Thyroid gland (tissue), 4 donors: ENCODE measurements at regions of chr1 and their contacts with region 1.

Region 1: DNA sequence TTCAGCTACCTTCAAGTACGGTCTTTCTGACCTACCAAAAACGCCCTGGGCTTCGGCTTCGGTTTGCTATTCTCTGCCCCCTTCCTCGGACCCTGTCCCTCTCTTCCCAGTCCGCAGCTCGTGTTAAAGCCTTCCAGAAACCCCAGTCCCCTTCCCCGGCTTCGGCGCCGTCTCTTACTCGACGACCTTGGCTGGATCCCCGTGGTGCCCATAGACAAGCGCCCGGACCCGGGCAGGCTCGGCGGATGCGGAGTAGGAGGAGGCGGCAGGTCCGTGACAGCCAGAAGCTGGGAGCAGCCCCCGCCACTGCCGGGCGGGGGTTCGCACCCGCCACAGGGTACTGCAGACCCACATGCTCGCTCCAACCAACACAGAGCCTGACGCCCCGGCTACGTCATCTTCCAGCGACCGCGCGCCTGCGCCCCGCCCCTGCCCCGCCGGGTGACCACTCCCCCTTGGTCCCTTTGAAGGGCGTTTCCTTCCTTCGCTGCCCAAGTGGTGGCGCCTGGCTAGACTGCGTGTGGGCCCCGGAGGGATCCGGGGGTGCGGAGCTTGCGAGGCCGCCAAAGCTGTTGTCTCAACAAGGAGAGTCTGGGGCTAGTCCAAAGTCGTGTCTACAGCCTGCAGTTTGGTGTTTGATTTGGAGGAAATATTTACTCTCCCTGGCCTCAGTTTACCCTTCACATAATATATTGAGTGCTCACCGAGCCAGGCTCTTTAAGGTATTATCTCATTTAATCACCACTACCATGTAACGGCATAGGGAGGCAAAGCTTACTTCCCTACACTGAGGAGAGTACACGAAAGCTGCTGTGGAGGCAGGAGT is at the start of gene MECR:
- DNase-seq: peak; percentile 88 to 90
- H3K4me3 ChIP-seq: peak within 1 kb of the TSS; percentile 10 to 77 (median 28)
- H3K27ac ChIP-seq: peak within 1 kb of the TSS in 2 of 3 donors; percentile 55 to 57
- H3K4me1 ChIP-seq: peaks cover 4 to 8% of the 10 kb centered on the region in 2 donors
- H3K27me3 ChIP-seq: no peaks in the 10 kb centered on the region
- CTCF ChIP-seq: peak in 2 of 6 experiments; percentile 2 to 32
- POLR2A ChIP-seq: peak in 1 of 2 donors; percentile 63
- total RNA-seq, gene MECR: 10.2 to 30.9 (median 18.0) TPM

Region 2: GRCh38 chr1:29145739-29146437 is 84.9 kb before region 1 on chr1:
- intact Hi-C with region 1: no loop called
- DNase-seq: no peak
- H3K4me3 ChIP-seq: no peak overlapping the region
- H3K27ac ChIP-seq: no peak overlapping the region
- H3K4me1 ChIP-seq: no peaks in the 10 kb centered on the region
- H3K27me3 ChIP-seq: no peaks in the 10 kb centered on the region
- CTCF ChIP-seq: no peak
- POLR2A ChIP-seq: no peak

Region 3: GRCh38 chr1:29415156-29415830 is 184.5 kb after region 1 on chr1:
- intact Hi-C with region 1: no loop called
- DNase-seq: no peak
- H3K4me3 ChIP-seq: no peak overlapping the region
- H3K27ac ChIP-seq: no peak overlapping the region
- H3K4me1 ChIP-seq: no peaks in the 10 kb centered on the region
- H3K27me3 ChIP-seq: no peaks in the 10 kb centered on the region
- CTCF ChIP-seq: no peak
- POLR2A ChIP-seq: no peak

Region 4: DNA sequence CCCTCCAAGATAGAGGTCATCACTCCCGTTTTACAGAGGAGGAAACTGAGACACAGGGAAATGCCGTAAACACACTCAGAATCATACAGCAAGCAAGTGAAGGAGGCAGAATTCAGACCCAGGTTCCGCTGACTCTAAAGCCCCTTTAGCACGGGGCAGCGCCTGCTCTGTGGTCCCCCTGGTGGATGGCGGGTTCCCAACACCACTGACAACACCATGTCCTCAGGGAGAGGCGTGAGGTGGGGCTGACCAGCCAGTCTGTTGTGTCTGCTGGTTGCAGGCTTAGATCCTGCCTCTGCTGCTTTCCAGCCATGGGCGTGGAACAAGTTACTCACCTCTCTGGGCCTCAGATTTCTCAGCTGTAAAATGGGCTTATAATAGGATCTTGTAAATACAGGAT is 875.4 kb after region 1 on chr1:
- intact Hi-C with region 1: loop called (anchors 10 kb)
- DNase-seq: peak; percentile 33 to 36
- H3K4me3 ChIP-seq: no peak overlapping the region
- H3K27ac ChIP-seq: no peak overlapping the region
- H3K4me1 ChIP-seq: no peaks in the 10 kb centered on the region
- H3K27me3 ChIP-seq: no peaks in the 10 kb centered on the region
- CTCF ChIP-seq: peak in 3 of 6 experiments; percentile 21 to 48 (median 47)
- POLR2A ChIP-seq: no peak

Region 5: GRCh38 chr1:30707412-30708360 is 1476.9 kb after region 1 on chr1:
- intact Hi-C with region 1: loop called (anchors 10 kb)
- DNase-seq: peak; percentile 69 to 75
- H3K4me3 ChIP-seq: no peak overlapping the region
- H3K27ac ChIP-seq: no peak overlapping the region
- H3K4me1 ChIP-seq: no peaks in the 10 kb centered on the region
- H3K27me3 ChIP-seq: no peaks in the 10 kb centered on the region
- CTCF ChIP-seq: peak; percentile 57 to 95 (median 83)
- POLR2A ChIP-seq: no peak